Upper lobe of right lung (tissue), 1 donor: ENCODE measurements at regions of chr6 and their contacts with region 1.

Region 1: GRCh38 chr6:151330134-151330696 is 61.1 kb downstream of the ZBTB2 start:
- DNase-seq: no peak
- ATAC-seq: no peak
- H3K4me3 ChIP-seq: no peak overlapping the region
- H3K27ac ChIP-seq: no peak overlapping the region
- H3K4me1 ChIP-seq: peaks cover 8% of the 10 kb centered on the region
- H3K27me3 ChIP-seq: no peaks in the 10 kb centered on the region
- CTCF ChIP-seq: no peak

Region 2: DNA sequence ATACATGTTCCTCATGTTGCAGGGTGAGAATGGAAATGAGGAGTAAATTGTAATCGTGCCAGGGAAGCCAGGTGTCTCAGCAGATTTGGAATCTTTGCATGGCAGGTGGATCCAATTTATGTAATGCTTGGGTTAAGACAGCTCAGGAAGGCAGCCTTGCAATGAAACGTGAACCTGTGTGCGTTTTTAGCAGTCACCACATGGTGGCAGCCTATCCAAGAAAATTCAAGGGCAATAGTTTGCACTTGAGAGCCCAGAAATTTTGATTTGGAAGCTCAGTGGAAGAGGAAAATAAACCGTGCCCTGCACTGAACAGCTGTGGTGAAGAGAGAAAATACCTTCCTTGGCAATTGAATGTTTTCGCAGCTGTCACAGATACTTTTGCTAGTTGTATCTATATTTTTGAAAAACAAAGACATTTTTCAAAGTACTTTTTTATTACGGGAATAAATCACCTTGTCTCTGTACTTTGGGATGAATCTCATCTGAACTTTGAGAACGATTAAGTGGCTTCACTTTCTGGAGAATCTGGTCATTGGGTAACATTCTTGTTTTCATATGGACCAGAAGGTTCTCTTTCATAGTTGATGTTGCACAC is 438.2 kb before region 1 on chr6:
- intact Hi-C with region 1: loop called (anchors 5 kb)
- DNase-seq: no peak
- ATAC-seq: peak; percentile 90
- H3K4me3 ChIP-seq: no peak overlapping the region
- H3K27ac ChIP-seq: no peak overlapping the region
- H3K4me1 ChIP-seq: no peaks in the 10 kb centered on the region
- H3K27me3 ChIP-seq: no peaks in the 10 kb centered on the region
- CTCF ChIP-seq: peak; percentile 81

Region 3: DNA sequence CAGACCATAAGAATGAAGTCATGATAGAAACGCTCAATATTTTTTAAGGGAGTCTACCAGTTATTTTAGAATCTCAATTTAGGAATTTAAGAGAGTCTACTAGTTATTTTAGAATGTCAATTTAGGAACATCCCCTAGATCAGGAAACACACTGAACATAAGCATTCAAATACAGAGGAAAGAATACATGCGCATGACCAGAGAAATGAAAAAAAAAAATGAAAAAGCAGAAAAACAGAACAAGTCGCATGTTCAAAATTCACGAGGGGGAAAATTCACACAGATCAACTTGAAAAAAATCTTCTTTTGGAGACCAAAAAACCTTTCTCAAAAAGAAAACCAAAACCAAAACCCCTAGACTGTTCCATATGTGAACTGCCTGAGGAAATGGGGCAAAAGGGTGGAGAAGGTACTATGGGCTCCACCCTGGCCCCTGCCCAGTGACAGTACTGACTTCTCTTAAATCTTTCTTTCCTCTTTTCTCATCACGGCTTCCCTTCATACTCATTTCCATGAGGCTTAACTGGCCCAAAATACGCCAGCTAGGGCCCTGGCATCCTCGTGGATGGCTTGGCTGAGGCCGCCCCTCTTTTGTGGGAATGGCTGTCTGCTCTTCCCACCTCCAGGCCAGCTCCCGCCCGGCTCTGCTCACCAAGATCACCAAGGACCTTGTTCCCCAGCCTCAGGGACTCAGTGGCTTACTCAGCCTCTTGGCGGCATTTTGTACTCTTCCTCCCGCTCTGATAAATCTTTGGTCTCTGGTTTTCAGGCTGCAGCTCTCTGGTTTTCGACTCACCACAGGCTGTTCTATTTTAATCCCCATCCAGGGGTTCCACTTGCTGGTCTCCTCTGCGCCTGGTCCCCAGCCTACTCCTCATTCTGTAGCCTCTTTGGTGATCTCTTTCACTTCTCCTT is 50.0 kb after region 1 on chr6:
- intact Hi-C with region 1: no loop called
- DNase-seq: no peak
- ATAC-seq: peak; percentile 91
- H3K4me3 ChIP-seq: no peak overlapping the region
- H3K27ac ChIP-seq: peak overlapping the region; percentile 56
- H3K4me1 ChIP-seq: peaks cover 8% of the 10 kb centered on the region
- H3K27me3 ChIP-seq: no peaks in the 10 kb centered on the region
- CTCF ChIP-seq: no peak